A549 (cell line): ENCODE measurements at regions of chr19 and their contacts with region 1.

Region 1: GRCh38 chr19:55289117-55289796 is 5.5 kb downstream of the BRSK1 start:
- DNase-seq: peak in 1 of 2 experiments; percentile 51
- ATAC-seq: peak; percentile 15 to 49; a peak in 4 of 6 replicates
- H3K4me3 ChIP-seq: no peak overlapping the region
- H3K27ac ChIP-seq: no peak overlapping the region
- H3K4me1 ChIP-seq: peaks cover 13% of the 10 kb centered on the region; the same call in 1 of the 3 replicates
- CTCF ChIP-seq: no peak
- EP300 ChIP-seq: no peak
- POLR2A ChIP-seq: no peak
- RAD21 ChIP-seq: no peak

Region 2: DNA sequence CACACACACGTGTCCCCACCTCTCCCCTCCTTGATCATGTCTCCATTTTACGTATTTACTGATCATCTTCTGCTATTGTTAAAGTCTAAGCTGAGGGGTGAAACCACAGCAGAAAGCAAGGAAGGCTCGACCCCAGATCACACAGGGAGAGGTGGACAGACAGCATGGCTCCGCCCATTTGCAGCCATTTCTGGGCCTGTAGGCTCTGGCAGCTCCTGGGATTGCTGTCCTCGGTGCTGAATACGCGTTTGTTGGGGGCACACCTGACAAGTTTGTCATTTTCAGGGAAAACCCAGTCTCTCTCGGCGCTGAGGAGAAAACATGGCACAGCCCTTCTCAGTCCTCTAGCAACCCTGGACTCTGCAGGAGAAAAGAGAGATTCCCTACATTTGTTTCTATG is 68.7 kb before region 1 on chr19:
- CTCF ChIA-PET with region 1: no interaction called
- POLR2A ChIA-PET with region 1: no interaction called
- DNase-seq: no peak
- ATAC-seq: no peak
- H3K4me3 ChIP-seq: no peak overlapping the region
- H3K27ac ChIP-seq: no peak overlapping the region
- H3K4me1 ChIP-seq: peaks cover 12% of the 10 kb centered on the region
- CTCF ChIP-seq: no peak
- EP300 ChIP-seq: no peak
- POLR2A ChIP-seq: no peak
- RAD21 ChIP-seq: no peak

Region 3: GRCh38 chr19:55301459-55302317 is 12.4 kb after region 1 on chr19:
- CTCF ChIA-PET with region 1: interaction called, 152 read pairs
- POLR2A ChIA-PET with region 1: no interaction called
- DNase-seq: peak; percentile 82 to 100
- ATAC-seq: peak; percentile 72 to 88
- H3K4me3 ChIP-seq: peak overlapping the region; percentile 54
- H3K27ac ChIP-seq: peak overlapping the region; percentile 87 to 88
- H3K4me1 ChIP-seq: peaks cover 6% of the 10 kb centered on the region; the same call in 2 of the 3 replicates
- CTCF ChIP-seq: peak; percentile 99
- EP300 ChIP-seq: no peak
- POLR2A ChIP-seq: peak; percentile 56
- RAD21 ChIP-seq: peak; percentile 83 to 92

Region 4: DNA sequence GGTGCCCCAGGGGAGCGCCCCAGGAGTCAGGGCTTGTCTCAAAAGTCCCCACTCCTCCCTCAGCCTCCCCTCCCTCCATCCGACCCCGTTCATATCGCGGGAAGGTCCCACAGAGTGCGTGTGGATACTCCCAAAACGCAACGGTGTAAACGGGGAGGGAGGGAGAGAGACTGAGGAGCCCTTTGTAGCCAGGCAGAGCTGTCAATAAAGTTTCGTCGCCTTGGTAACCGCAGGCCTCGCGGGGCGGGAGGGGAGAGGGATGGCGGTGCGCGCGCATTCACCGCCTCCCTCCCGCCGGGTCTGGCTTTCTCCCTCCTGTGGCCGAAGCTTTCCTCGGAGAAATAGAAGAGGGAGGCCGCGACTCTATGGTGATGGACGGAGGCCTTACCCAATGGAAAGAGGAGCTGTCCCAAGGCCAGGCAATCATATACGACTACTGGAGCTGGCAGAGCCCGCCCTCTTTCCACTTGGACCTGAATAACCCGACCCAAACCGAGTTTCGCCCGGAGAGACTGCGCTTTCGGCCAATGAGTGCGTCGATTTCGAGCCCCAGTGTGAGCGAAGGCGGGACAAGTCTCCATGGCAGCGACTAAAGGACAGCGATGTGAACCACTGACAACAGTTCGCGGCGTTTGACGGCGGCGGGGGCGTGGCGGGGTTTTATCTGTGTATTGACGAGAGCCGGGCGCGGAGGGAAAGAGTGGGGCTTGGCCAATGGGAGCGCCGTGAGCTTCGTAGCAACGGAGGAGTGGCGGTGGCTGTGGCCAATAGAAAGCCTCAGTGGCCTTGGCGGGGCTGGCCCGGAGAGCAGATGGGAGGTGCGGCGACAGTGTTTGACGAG is 50.0 kb after region 1 on chr19 and contains the start of gene KMT5C:
- CTCF ChIA-PET with region 1: interaction called, 38 read pairs
- POLR2A ChIA-PET with region 1: interaction called, 5 read pairs
- DNase-seq: peak; percentile 100
- ATAC-seq: peak; percentile 81 to 92
- H3K4me3 ChIP-seq: peak within 1 kb of the TSS; percentile 63
- H3K27ac ChIP-seq: peak within 1 kb of the TSS; percentile 90 to 93
- H3K4me1 ChIP-seq: peaks cover 17% of the 10 kb centered on the region
- CTCF ChIP-seq: no peak
- EP300 ChIP-seq: no peak
- POLR2A ChIP-seq: no peak
- RAD21 ChIP-seq: no peak; a peak in 1 of 5 replicates
- polyA plus RNA-seq, gene KMT5C: 6.6 and 9.5 TPM in 2 replicates

Region 5: GRCh38 chr19:55369671-55370304 is 80.5 kb after region 1 on chr19:
- CTCF ChIA-PET with region 1: interaction called, 18 read pairs
- POLR2A ChIA-PET with region 1: no interaction called
- DNase-seq: peak; percentile 86 to 98
- ATAC-seq: peak; percentile 45 to 71
- H3K4me3 ChIP-seq: peak overlapping the region; percentile 85
- H3K27ac ChIP-seq: peak overlapping the region; percentile 91 to 96
- H3K4me1 ChIP-seq: peaks cover 61% of the 10 kb centered on the region
- CTCF ChIP-seq: no peak
- EP300 ChIP-seq: no peak
- POLR2A ChIP-seq: no peak
- RAD21 ChIP-seq: no peak

Region 6: GRCh38 chr19:55398200-55398925 is 109.1 kb after region 1 on chr19:
- CTCF ChIA-PET with region 1: interaction called, 22 read pairs
- POLR2A ChIA-PET with region 1: no interaction called
- DNase-seq: no peak
- ATAC-seq: peak in 1 of 2 experiments; percentile 9; a peak in 3 of 6 replicates
- H3K4me3 ChIP-seq: no peak overlapping the region
- H3K27ac ChIP-seq: no peak overlapping the region
- H3K4me1 ChIP-seq: peaks cover 20% of the 10 kb centered on the region
- CTCF ChIP-seq: no peak
- EP300 ChIP-seq: no peak
- POLR2A ChIP-seq: no peak
- RAD21 ChIP-seq: no peak